Stomach (tissue), 19 donors: ENCODE measurements at regions of chr1 and their contacts with region 1.

Region 1: DNA sequence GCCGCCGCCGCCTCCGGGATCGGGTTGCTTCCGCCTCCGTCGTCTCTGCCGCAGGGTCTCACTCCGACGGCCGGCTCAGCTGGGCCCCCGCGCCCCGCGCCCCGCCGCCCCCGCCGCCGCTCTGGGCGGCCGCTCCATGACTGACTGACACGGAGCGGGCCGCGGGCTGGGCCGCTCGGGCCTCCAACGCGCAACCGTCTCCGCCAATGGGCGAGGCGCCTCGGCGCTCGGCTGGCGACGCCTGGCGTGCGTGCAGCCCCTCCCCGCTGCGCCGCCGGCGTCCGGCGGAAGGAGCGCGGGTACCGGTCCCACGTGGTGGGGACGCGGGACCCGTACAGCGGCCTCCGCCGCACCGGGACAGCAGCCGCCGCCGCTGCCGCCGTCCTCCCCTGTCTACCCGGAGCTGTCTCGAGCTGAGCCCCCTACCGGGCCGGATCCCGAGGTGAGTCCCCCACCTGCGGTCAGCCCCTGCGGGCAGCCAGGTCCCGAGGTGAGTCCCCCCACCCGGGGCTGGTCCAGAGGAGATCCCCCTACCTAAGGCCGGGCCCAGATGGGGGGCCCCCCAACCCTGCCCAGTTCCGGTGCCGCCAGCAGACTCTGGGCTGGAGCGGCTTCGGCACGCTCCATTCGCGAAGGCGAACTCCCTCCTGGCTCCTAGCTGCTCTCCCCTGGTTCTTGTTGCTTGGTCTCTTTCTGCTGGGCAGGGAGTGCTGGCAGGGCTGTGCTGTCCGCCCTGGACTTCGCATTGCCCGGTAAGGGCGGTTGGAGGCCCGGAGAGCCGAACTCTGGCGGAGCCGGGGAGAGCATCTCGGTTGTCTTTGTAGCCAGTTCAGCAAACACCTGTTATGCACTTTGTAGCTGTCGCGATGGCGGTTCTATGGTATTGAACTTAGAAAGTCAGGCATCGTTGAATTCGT is at the starts of genes TAF5L and URB2:
- DNase-seq: peak; percentile 90 to 97
- H3K4me3 ChIP-seq: peak within 1 kb of the TSS; percentile 93 to 99 (median 96)
- H3K27ac ChIP-seq: peak within 1 kb of the TSS; percentile 86 to 98 (median 91)
- H3K4me1 ChIP-seq: peaks cover 31 to 55% (median 43%) of the 10 kb centered on the region in 4 donors
- H3K27me3 ChIP-seq: no peaks in the 10 kb centered on the region
- CTCF ChIP-seq: peak in 1 of 7 experiments; percentile 20
- EP300 ChIP-seq: no peak
- POLR2A ChIP-seq: no peak
- total RNA-seq, gene TAF5L: 0.29 to 33.8 (median 18.4) TPM
- total RNA-seq, gene URB2: 4.1 to 16.8 (median 8.5) TPM in 4 of 5 donors, not detected in the other

Region 2: DNA sequence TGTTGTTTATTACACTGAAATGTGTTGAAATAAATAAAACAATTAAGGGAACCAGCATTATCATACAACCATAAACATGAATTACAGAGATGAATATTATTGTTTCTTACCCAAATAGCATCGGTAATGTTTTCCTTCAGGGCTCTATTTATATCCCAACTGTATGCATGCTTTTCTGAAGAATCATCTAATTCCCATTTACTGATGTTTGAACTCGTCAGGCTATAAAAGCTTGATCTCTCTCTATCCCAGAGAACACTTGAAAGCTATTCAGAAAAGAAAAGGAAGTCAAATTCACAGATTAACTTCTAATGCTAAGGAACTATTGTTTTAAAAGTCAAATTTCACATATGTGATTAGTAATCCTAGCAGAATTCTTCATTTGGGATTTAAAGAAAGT is 130.4 kb before region 1 on chr1:
- intact Hi-C with region 1: no loop called
- DNase-seq: no peak
- H3K4me3 ChIP-seq: no peak overlapping the region
- H3K27ac ChIP-seq: no peak overlapping the region
- H3K4me1 ChIP-seq: no peaks in the 10 kb centered on the region
- H3K27me3 ChIP-seq: no peaks in the 10 kb centered on the region
- CTCF ChIP-seq: no peak
- EP300 ChIP-seq: no peak
- POLR2A ChIP-seq: no peak

Region 3: GRCh38 chr1:229563701-229564100 is 62.5 kb before region 1 on chr1:
- intact Hi-C with region 1: loop called (anchors 5 kb)
- DNase-seq: peak in 1 of 2 donors; percentile 59
- H3K4me3 ChIP-seq: peak overlapping the region in 1 of 4 donors; percentile 6
- H3K27ac ChIP-seq: peak overlapping the region in 4 of 5 donors; percentile 26 to 85 (median 70)
- H3K4me1 ChIP-seq: peaks cover 5 to 17% (median 8%) of the 10 kb centered on the region in 4 donors
- H3K27me3 ChIP-seq: no peaks in the 10 kb centered on the region
- CTCF ChIP-seq: no peak
- EP300 ChIP-seq: peak; percentile 72
- POLR2A ChIP-seq: no peak